SK-N-SH (cell line): ENCODE measurements at regions of chr2 and their contacts with region 1.

Region 1: DNA sequence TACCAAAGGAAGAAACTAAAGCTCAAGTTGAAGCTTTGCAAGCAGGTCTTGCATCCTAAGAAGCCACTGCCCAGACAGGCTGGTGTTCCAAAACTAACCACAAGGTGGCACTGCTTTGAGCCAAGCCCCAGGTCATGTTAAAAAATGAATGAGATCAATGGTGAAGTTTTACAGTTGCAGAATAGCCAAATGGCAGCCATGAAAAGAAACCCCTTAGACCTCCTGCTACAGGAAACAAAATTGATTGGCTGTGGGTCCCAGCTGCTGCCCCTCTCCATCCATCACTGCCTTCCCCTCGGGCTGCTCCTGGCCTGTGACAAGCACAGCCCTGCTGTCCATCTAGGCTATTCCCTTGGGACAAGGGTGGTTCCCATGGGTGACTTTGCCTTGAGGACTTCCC is 20.7 kb upstream of the MREG start:
- DNase-seq: peak; percentile 68
- H3K4me3 ChIP-seq: peak overlapping the region in 1 of 2 experiments; percentile 43; a peak in 1 of 4 replicates
- H3K27ac ChIP-seq: no peak overlapping the region
- H3K4me1 ChIP-seq: peaks cover 2 to 5% of the 10 kb centered on the region in 2 experiments; a peak in 1 of 4 replicates
- H3K27me3 ChIP-seq: no peaks in the 10 kb centered on the region
- CTCF ChIP-seq: peak; percentile 87
- EP300 ChIP-seq: no peak
- RAD21 ChIP-seq: peak; percentile 67

Region 2: DNA sequence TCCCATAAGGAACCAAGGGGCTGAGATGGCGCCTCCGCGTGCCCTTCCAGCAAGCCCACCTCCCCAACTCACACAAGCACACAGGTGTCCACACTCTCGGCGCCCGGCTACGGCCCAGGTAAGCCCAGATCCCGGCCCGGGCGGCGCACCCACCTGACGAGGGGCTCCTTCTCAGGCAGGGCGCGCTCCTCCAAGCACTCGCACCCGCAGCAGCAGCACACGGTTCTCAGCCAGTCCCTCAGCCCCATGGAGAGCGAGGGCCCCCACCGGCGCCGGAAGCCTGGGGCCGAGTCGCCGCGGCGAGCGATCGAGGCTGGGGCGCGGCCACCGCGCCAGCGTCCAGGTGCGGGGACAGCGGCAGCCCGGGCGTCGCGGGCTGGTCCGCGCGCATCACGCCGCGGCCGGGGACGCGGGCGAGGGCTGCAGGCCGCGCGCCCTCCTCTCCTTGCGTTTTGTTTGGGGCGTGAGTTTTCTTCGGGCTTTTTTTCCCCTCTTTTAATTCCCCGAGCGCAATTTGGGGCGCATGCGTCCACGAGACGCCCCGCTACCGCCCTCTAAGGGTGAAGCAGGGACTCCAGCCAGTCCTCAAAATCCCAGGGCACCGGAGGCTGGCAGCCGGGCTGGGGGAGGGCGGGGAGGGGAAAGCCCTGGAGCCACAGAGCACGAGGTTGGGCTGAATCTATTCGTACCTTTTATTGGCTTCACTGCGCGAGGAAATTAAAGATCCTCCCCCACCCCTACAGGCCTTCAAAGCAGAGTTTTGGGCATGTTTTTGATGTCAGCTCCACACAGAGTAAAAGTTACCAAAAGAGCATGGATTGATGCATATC is 20.8 kb before region 1 on chr2 and contains the start of gene MREG:
- CTCF ChIA-PET with region 1: interaction called, 109 read pairs
- POLR2A ChIA-PET with region 1: no interaction called
- DNase-seq: peak; percentile 98
- H3K4me3 ChIP-seq: peak within 1 kb of the TSS; percentile 89 to 97
- H3K27ac ChIP-seq: peak within 1 kb of the TSS; percentile 54 to 58; a peak in 3 of 4 replicates
- H3K4me1 ChIP-seq: peaks cover 0 to 14% of the 10 kb centered on the region in 2 experiments; a peak in 3 of 4 replicates
- H3K27me3 ChIP-seq: no peaks in the 10 kb centered on the region
- CTCF ChIP-seq: peak; percentile 63
- EP300 ChIP-seq: no peak
- RAD21 ChIP-seq: peak; percentile 10; the same call in 1 of the 2 replicates
- polyA plus RNA-seq, gene MREG: 2.5 and 3.5 TPM in 2 replicates

Region 3: DNA sequence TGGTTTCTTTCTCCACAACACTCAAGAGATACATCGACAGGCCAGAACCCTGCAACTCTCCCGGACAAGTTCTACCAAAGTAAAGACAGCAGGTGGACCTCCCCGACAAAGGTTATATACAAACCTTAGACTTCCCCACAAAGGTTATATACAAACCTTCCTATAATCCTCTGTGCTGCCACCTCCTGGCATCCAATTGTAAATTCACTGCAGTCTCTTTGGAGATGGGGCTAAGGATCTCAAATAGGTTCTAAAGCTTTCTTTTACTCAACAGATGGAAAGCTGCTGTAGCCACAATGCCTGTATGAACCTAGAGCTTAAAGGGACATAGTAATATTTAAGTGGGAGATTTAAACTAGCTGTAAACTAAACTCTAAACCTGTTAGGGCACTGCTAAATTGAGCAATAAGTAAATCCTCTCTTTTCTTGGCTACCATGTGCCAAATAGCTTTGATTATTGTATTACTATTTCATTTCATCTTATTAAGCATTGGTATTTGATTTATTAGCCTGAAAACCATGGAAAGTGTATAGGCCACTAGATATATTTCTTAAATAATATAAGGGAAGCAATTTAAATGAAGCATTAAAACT is 10.9 kb before region 1 on chr2:
- CTCF ChIA-PET with region 1: interaction called, 109 read pairs
- POLR2A ChIA-PET with region 1: no interaction called
- DNase-seq: peak; percentile 72
- H3K4me3 ChIP-seq: no peak overlapping the region
- H3K27ac ChIP-seq: no peak overlapping the region
- H3K4me1 ChIP-seq: no peaks in the 10 kb centered on the region
- H3K27me3 ChIP-seq: no peaks in the 10 kb centered on the region
- CTCF ChIP-seq: peak; percentile 76
- EP300 ChIP-seq: no peak
- RAD21 ChIP-seq: peak; percentile 64

Region 4: DNA sequence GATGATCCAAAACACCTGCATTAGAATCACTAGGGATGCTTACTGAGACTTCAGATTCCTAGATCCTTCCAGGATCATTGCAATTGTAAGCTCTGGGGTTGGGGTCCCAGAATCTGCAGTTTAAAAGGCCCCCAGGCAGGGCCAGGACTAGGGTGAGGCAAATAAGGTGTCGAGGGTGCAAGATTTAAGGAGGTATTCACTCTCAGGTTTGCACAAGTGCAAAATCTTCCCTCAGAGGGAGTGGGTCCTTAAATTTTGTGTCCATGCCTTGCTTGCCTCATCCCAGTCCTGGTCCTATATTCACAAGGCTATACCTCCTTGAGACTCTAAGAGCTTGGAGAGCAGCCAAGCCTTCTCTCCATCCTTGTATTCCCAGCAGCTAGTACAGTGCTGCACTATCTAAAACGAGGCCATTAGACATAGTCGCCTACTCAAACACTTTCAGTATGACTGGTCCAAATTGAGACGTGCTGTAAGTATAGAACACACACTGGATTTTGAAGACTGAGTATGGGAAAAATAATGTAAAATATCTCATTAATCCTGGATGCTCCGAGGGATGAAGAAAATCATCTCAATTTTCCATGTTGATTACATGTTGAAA is 10.9 kb after region 1 on chr2:
- CTCF ChIA-PET with region 1: interaction called, 23 read pairs
- POLR2A ChIA-PET with region 1: interaction called, 5 read pairs
- DNase-seq: no peak
- H3K4me3 ChIP-seq: no peak overlapping the region
- H3K27ac ChIP-seq: no peak overlapping the region
- H3K4me1 ChIP-seq: no peaks in the 10 kb centered on the region
- H3K27me3 ChIP-seq: no peaks in the 10 kb centered on the region
- CTCF ChIP-seq: no peak
- EP300 ChIP-seq: no peak
- RAD21 ChIP-seq: no peak

Region 5: DNA sequence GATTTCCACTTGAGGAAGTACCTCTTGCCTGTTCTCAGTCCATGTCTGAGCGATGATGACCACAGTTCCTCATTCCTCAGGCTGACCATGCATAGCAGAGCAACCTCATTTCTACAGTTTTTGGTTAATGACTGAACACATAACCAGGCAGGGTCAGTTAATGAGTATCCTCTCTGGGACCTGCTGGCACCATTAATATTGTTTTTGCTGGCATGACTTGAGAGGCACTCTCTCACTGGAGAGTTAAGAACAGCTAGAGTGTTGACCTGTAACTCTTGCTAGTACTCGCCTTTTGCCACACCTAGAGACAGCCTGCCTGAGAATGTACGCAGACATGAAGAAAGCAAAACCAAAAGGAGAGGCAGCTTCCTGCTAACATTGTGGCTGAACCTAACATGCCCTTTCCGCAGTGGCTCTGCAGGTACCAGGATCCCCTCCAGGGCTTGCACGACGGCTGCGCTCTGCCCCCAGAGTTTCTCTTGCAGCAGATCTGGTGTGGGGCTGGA is 23.7 kb after region 1 on chr2:
- CTCF ChIA-PET with region 1: interaction called, 20 read pairs
- POLR2A ChIA-PET with region 1: no interaction called
- DNase-seq: no peak
- H3K4me3 ChIP-seq: no peak overlapping the region
- H3K27ac ChIP-seq: no peak overlapping the region
- H3K4me1 ChIP-seq: no peaks in the 10 kb centered on the region; a peak in 2 of 4 replicates
- H3K27me3 ChIP-seq: no peaks in the 10 kb centered on the region
- CTCF ChIP-seq: no peak
- EP300 ChIP-seq: no peak
- RAD21 ChIP-seq: no peak

Region 6: DNA sequence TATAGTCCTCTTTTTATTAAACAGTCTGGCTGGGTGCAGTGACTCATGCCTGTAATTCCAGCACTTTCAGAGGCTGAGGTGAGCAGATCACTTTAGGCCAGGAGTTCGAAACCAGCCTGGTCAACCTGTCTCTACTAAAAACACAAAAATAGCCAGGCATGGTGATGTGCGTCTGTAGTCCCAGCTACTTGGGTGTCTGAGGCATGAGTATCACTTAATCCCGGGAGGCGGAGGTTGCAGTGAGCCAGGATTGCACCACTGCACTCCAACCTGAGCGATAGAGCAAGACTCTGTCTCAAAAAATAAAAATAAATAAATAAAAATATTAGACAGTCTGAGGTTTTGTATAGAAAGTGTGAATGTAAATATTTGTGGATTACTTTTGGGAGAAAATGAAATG is 92.9 kb after region 1 on chr2:
- CTCF ChIA-PET with region 1: no interaction called
- POLR2A ChIA-PET with region 1: no interaction called
- DNase-seq: no peak
- H3K4me3 ChIP-seq: no peak overlapping the region
- H3K27ac ChIP-seq: no peak overlapping the region
- H3K4me1 ChIP-seq: peaks cover 0 to 3% of the 10 kb centered on the region in 2 experiments; a peak in 2 of 4 replicates
- H3K27me3 ChIP-seq: no peaks in the 10 kb centered on the region
- CTCF ChIP-seq: no peak
- EP300 ChIP-seq: no peak
- RAD21 ChIP-seq: no peak

Region 7: GRCh38 chr2:217016796-217017419 is 982.8 kb after region 1 on chr2:
- CTCF ChIA-PET with region 1: no interaction called
- POLR2A ChIA-PET with region 1: no interaction called
- DNase-seq: no peak
- H3K4me3 ChIP-seq: no peak overlapping the region
- H3K27ac ChIP-seq: no peak overlapping the region
- H3K4me1 ChIP-seq: no peaks in the 10 kb centered on the region
- H3K27me3 ChIP-seq: no peaks in the 10 kb centered on the region
- CTCF ChIP-seq: no peak
- EP300 ChIP-seq: no peak
- RAD21 ChIP-seq: no peak